Esophagus squamous epithelium (tissue), 5 donors: ENCODE measurements at regions of chr14 and their contacts with region 1.

Region 1: GRCh38 chr14:52824507-52824906 is 33.1 kb upstream of the GNPNAT1 start:
- DNase-seq: no peak
- H3K4me3 ChIP-seq: no peak overlapping the region
- H3K27ac ChIP-seq: no peak overlapping the region
- H3K4me1 ChIP-seq: no peaks in the 10 kb centered on the region
- H3K27me3 ChIP-seq: no peaks in the 10 kb centered on the region
- CTCF ChIP-seq: no peak
- POLR2A ChIP-seq: no peak

Region 2: GRCh38 chr14:52961060-52961639 is 136.6 kb after region 1 on chr14:
- intact Hi-C with region 1: loop called (anchors 5 kb)
- DNase-seq: no peak
- H3K4me3 ChIP-seq: no peak overlapping the region
- H3K27ac ChIP-seq: peak overlapping the region in 3 of 4 donors; percentile 25 to 49 (median 28)
- H3K4me1 ChIP-seq: peaks cover 0 to 10% (median 6%) of the 10 kb centered on the region in 3 donors
- H3K27me3 ChIP-seq: no peaks in the 10 kb centered on the region
- CTCF ChIP-seq: peak; percentile 34 to 69 (median 56)
- POLR2A ChIP-seq: no peak

Region 3: DNA sequence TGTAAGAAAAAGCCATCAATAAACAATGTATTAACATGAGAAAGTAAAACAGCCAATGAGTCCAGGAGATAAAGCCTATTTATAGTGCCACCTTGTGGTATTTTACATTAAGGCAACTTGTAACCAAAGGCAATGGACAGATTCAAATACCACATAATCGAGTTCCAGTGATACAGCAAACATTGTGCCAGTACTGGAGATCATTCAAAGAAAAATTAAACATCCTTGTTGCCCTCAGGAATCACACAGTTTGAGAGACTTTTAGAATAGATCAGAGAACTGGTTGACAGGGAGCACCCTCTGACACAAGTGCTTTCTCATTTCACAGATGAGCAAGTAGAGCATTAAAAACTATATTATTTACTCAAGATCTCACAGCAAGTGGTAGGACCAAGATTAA is 230.5 kb after region 1 on chr14:
- intact Hi-C with region 1: loop called (anchors 10 kb)
- DNase-seq: no peak
- H3K4me3 ChIP-seq: no peak overlapping the region
- H3K27ac ChIP-seq: no peak overlapping the region
- H3K4me1 ChIP-seq: no peaks in the 10 kb centered on the region
- H3K27me3 ChIP-seq: no peaks in the 10 kb centered on the region
- CTCF ChIP-seq: peak in 5 of 6 experiments; percentile 44 to 74 (median 63)
- POLR2A ChIP-seq: no peak